Gastrocnemius medialis (tissue), 4 donors: ENCODE measurements at regions of chr9 and their contacts with region 1.

Region 1: DNA sequence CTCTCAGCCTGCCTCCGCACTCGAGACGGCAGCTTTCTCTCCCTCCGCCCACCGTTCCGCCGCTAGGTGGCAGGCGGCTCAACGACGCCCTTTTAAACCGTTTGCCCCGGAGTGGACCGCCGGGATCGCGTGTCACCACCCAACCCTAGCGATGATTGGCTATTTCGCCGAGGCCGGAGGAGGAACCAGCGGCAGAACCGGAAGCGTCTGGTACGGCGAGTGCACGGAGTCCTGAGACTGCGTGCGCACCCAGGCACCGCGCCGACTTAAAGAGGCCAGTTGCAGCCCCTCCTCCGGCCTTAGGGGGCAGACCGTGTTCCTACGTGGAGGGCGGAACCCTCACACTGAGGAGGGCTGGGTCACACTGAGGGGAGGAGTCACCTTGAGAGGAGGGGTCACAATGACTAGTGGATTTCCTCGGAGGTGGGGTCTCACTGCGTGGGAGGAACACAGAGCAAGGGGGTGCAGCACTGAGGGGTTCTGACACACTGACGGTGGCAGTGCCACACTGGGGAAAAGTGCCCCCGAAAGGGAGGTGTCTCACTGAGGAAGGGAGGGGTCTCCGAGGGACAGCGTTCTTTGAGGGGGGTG is 980 bp upstream of the TESK1 start:
- DNase-seq: peak; percentile 100
- ATAC-seq: peak; percentile 82 to 83
- H3K4me3 ChIP-seq: peak overlapping the region; percentile 64 to 80 (median 74)
- H3K27ac ChIP-seq: peak overlapping the region; percentile 93 to 99 (median 99)
- H3K4me1 ChIP-seq: peaks cover 33 to 41% of the 10 kb centered on the region in 2 donors
- H3K27me3 ChIP-seq: no peaks in the 10 kb centered on the region
- CTCF ChIP-seq: peak; percentile 96 to 100 (median 98)
- POLR2A ChIP-seq: peak; percentile 85 to 91

Region 2: GRCh38 chr9:35071814-35072460 is 532.1 kb before region 1 on chr9:
- in situ Hi-C with region 1: no loop called
- intact Hi-C with region 1: loop called (anchors 5 kb)
- DNase-seq: peak; percentile 81 to 83
- ATAC-seq: peak; percentile 64 to 70
- H3K4me3 ChIP-seq: peak overlapping the region; percentile 91 to 100 (median 94)
- H3K27ac ChIP-seq: peak overlapping the region; percentile 92 to 100 (median 98)
- H3K4me1 ChIP-seq: peaks cover 29 to 38% of the 10 kb centered on the region in 2 donors
- H3K27me3 ChIP-seq: no peaks in the 10 kb centered on the region
- CTCF ChIP-seq: peak; percentile 15 to 55 (median 39)
- POLR2A ChIP-seq: peak; percentile 85 to 93

Region 3: GRCh38 chr9:35489313-35490154 is 114.5 kb before region 1 on chr9 and contains the start of gene RUSC2:
- in situ Hi-C with region 1: no loop called
- intact Hi-C with region 1: loop called (anchors 1 kb)
- DNase-seq: peak; percentile 72 to 88
- ATAC-seq: peak; percentile 56 to 71
- H3K4me3 ChIP-seq: peak within 1 kb of the TSS; percentile 79 to 89 (median 88)
- H3K27ac ChIP-seq: peak within 1 kb of the TSS; percentile 91 to 97 (median 96)
- H3K4me1 ChIP-seq: peaks cover 31% of the 10 kb centered on the region in 2 donors
- H3K27me3 ChIP-seq: no peaks in the 10 kb centered on the region
- CTCF ChIP-seq: peak; percentile 52 to 83 (median 61)
- POLR2A ChIP-seq: peak; percentile 86 to 88
- total RNA-seq, gene RUSC2: 20.8 to 166 (median 45.7) TPM

Region 4: DNA sequence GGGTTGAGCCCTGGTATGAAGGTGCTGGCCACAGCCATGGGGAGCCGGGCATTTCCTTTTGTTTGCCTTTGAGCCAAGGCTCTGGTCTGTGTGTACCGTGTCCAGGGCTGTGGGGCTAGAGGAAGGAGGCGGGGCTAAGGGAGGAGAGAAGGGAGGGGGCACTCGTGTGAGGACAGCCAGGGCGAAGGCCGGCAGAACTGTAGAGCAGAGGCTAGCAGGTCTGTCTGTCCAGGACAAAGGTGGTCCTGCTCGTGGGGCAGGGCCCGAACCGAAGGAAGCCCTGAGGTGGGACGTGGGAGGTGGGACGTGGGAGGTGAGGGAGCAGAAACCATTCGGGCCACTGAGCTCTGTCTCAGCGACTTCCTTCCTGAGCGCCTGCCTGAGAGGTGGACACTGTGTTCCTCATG is 40.3 kb before region 1 on chr9:
- in situ Hi-C with region 1: no loop called
- intact Hi-C with region 1: loop called (anchors 1 kb)
- DNase-seq: peak; percentile 55 to 81
- ATAC-seq: peak; percentile 31 to 34
- H3K4me3 ChIP-seq: peak overlapping the region; percentile 46 to 59 (median 51)
- H3K27ac ChIP-seq: peak overlapping the region; percentile 83 to 95 (median 90)
- H3K4me1 ChIP-seq: peaks cover 82 to 95% of the 10 kb centered on the region in 2 donors
- H3K27me3 ChIP-seq: no peaks in the 10 kb centered on the region
- CTCF ChIP-seq: no peak
- POLR2A ChIP-seq: peak; percentile 48 to 73

Region 5: GRCh38 chr9:35657546-35658136 is 53.6 kb after region 1 on chr9 and contains the start of gene RMRP:
- in situ Hi-C with region 1: no loop called
- intact Hi-C with region 1: loop called (anchors 2 kb)
- DNase-seq: peak; percentile 97 to 98
- ATAC-seq: peak; percentile 91 to 96
- H3K4me3 ChIP-seq: peak within 1 kb of the TSS; percentile 79 to 85 (median 82)
- H3K27ac ChIP-seq: peak within 1 kb of the TSS; percentile 92 to 97 (median 96)
- H3K4me1 ChIP-seq: peaks cover 28 to 29% of the 10 kb centered on the region in 2 donors
- H3K27me3 ChIP-seq: no peaks in the 10 kb centered on the region
- CTCF ChIP-seq: peak; percentile 44 to 56 (median 52)
- POLR2A ChIP-seq: peak; percentile 56 to 61
- total RNA-seq, gene RMRP: 115 to 715 (median 367) TPM

Region 6: DNA sequence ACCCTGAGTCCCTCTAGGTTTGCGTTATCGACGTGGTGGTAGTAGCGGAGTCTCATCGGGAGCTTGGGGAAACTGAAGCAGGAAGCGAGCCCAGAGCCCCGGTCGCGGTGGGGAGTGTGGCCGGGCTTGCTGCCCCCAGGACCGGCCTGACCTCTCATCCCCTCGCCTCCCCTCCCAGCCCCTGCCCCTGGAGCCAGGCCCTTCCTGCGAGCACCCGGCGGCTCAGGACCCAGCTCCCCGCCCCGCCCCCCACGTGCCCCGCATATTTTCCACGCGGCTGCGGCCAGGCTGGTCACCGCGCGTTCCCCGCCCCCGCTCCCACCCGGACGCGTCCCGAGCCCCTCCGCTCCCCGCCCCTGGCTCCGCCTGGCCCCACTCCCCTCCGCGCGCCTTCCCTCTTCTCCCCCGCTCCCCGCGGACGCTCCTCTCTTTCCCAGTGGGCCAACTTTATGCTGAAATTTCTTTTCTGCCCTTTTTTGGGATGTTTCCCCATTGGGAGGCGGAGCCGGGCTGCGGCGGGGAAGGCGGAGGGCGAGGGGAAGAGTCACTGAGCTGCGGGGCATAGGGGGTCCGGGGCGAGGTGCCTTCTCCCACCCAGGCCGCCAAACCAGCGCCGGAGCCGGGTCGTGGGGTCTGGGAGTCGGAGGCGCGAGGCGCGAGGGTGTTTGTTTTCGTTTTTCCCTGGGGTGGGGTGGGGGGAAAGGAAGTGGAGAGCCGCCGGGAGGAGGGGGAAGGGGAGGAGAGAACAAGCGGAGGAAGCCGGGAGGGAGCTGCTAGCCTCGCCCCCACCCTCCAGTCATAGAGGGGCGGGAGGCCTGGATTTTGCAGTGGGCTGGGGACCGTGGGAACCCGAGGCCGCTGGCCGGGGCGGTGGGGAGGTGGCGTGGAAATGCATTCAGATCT is 86.6 kb after region 1 on chr9:
- in situ Hi-C with region 1: no loop called
- intact Hi-C with region 1: loop called (anchors 1 kb)
- DNase-seq: peak; percentile 56 to 75
- ATAC-seq: peak; percentile 21 to 32
- H3K4me3 ChIP-seq: peak overlapping the region; percentile 77 to 96 (median 87)
- H3K27ac ChIP-seq: peak overlapping the region; percentile 97 to 99 (median 98)
- H3K4me1 ChIP-seq: peaks cover 35 to 37% of the 10 kb centered on the region in 2 donors
- H3K27me3 ChIP-seq: no peaks in the 10 kb centered on the region
- CTCF ChIP-seq: no peak
- POLR2A ChIP-seq: peak; percentile 21 to 25

Region 7: DNA sequence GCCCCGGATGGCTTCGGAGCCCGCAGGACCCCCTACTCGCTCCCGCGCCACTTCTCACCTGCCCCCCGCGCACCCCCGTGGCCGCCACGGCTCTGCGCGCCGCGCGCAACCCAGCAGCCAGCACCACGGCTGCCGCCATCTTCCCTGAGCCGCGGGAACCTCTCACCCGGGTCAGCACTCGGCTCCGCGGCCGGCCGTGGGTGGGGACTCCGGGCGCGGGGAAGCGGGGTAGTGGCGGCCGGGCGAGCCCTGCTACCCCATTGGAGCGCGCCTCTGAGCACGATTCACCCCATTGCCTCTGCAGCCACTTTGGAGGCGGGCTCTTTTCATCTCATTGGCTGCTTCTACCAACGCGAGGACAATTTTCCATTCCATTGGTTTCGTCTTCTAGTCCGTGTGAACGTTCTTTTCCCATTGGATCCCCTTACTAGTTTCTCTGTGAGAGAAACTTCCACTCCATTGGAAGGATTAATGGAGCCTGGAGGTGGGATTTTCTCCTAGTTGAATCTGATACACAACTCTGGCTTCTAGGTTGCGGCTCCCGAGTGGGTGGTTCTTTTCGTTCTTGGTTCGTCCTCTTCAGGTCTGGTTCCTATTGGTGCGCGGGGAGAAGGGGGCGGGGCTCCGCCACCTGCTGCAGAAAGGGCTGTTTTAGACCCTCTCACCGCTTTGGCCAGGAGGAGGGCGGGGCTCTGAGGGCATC is 210.9 kb after region 1 on chr9 and contains the start of gene HINT2:
- in situ Hi-C with region 1: no loop called
- intact Hi-C with region 1: loop called (anchors 5 kb)
- DNase-seq: peak; percentile 95 to 98
- ATAC-seq: peak; percentile 87 to 95
- H3K4me3 ChIP-seq: peak within 1 kb of the TSS; percentile 78 to 93 (median 84)
- H3K27ac ChIP-seq: peak within 1 kb of the TSS; percentile 95 to 98 (median 96)
- H3K4me1 ChIP-seq: peaks cover 30 to 34% of the 10 kb centered on the region in 2 donors
- H3K27me3 ChIP-seq: no peaks in the 10 kb centered on the region
- CTCF ChIP-seq: peak in 1 of 5 experiments; percentile 3
- POLR2A ChIP-seq: peak; percentile 92 to 94
- total RNA-seq, gene HINT2: 4.5 to 26.7 (median 22.0) TPM